ENCODE measurements at regions of chr2 and their contacts with region 1.

Region 1: GRCh38 chr2:85888684-85889626 is at the start of gene ST3GAL5:
- DNase-seq: peak; percentile 93
- ATAC-seq: peak; percentile 89
- H3K4me3 Mint-ChIP-seq: peak within 1 kb of the TSS; percentile 82
- H3K27ac Mint-ChIP-seq: peak within 1 kb of the TSS; percentile 86
- H3K4me1 Mint-ChIP-seq: peaks cover 72% of the 10 kb centered on the region
- H3K27me3 Mint-ChIP-seq: no peaks in the 10 kb centered on the region
- total RNA-seq, gene ST3GAL5: 73.9 to 74.0 TPM

Region 2: DNA sequence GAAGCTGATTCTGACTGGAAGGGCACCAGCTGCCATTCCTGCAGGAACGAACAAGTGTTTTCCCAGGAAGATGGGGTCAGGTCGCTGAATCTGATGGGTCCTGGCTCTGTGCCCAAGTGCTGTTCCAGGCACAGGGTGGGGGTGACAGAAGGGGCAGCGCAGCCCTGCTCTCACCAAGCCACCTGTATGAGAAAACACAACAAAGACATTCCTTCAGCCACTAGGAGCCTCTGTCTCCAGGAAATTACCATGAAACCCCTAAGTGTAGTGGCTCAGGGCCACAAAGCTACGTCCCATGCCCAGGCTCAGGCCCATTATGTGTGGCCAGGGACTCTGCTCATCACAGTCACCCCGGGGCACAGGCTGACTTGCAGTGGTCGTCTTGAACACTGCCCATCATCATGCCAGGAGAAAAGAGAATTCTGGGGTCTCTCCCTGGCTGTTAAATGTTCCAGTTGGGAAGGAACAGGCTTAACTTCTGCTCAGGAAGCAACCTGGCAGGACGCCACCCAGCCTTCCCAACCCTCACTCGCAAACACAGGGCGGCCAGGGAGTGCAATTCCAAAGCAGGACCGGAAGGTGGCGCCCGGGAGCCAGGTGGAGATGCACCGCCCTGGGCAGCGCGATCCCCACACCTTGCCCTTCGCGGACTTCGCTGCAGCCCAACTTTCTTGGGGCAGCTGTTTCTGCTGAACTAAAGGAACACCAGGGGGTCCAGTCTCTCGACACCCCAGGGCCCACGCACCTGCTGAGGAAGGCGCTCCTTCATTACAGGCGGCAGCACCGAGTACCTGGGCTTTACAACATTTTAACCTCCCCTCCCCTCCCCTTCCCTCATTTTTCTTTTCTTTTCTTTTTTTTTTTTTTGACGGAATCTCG is 209.9 kb before region 1 on chr2:
- CTCF ChIA-PET with region 1: no interaction called
- DNase-seq: peak; percentile 84
- ATAC-seq: peak; percentile 88
- H3K4me3 Mint-ChIP-seq: no peak overlapping the region
- H3K27ac Mint-ChIP-seq: peak overlapping the region; percentile 34
- H3K4me1 Mint-ChIP-seq: peaks cover 32% of the 10 kb centered on the region
- H3K27me3 Mint-ChIP-seq: peaks cover 12% of the 10 kb centered on the region

Region 3: GRCh38 chr2:85852937-85853498 is 35.9 kb before region 1 on chr2:
- CTCF ChIA-PET with region 1: interaction called, 78 read pairs
- DNase-seq: peak; percentile 89
- ATAC-seq: peak; percentile 85
- H3K4me3 Mint-ChIP-seq: peak overlapping the region; percentile 82
- H3K27ac Mint-ChIP-seq: peak overlapping the region; percentile 99
- H3K4me1 Mint-ChIP-seq: peaks cover 76% of the 10 kb centered on the region
- H3K27me3 Mint-ChIP-seq: no peaks in the 10 kb centered on the region

Region 4: DNA sequence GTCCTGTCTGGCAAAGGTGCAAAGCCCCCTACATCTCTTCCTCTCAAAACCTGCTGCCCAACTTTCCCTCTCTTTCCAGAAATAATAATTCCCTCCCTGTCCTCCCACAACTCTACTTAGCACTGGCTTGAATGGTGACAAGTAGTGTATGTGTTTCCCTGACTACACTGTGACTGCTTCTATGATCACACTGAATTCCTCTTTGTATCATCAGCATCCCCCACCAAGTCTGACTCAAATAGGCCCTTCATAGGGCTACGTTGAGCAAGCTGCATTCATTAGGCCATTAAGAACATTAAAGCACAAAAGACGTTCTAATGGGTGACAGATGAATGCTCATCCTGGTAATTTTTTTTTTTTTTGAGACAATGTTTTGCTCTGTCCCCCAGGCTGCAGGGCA is 13.5 kb after region 1 on chr2:
- CTCF ChIA-PET with region 1: interaction called, 23 read pairs
- DNase-seq: no peak
- ATAC-seq: no peak
- H3K4me3 Mint-ChIP-seq: no peak overlapping the region
- H3K27ac Mint-ChIP-seq: no peak overlapping the region
- H3K4me1 Mint-ChIP-seq: peaks cover 8% of the 10 kb centered on the region
- H3K27me3 Mint-ChIP-seq: peaks cover 5% of the 10 kb centered on the region

Region 5: GRCh38 chr2:86035883-86036668 is 147.1 kb after region 1 on chr2:
- CTCF ChIA-PET with region 1: interaction called, 121 read pairs
- DNase-seq: peak; percentile 89
- ATAC-seq: peak; percentile 48
- H3K4me3 Mint-ChIP-seq: peak overlapping the region; percentile 63
- H3K27ac Mint-ChIP-seq: peak overlapping the region; percentile 95
- H3K4me1 Mint-ChIP-seq: peaks cover 72% of the 10 kb centered on the region
- H3K27me3 Mint-ChIP-seq: no peaks in the 10 kb centered on the region

Region 6: GRCh38 chr2:86072271-86072858 is 183.4 kb after region 1 on chr2:
- CTCF ChIA-PET with region 1: interaction called, 126 read pairs
- DNase-seq: no peak
- ATAC-seq: no peak
- H3K4me3 Mint-ChIP-seq: no peak overlapping the region
- H3K27ac Mint-ChIP-seq: peak overlapping the region; percentile 58
- H3K4me1 Mint-ChIP-seq: peaks cover 33% of the 10 kb centered on the region
- H3K27me3 Mint-ChIP-seq: no peaks in the 10 kb centered on the region

Measured in activated CD8-positive, alpha-beta memory T cell treated with anti-CD3 and anti-CD28 coated beads, Interleukin-2, amount 10 ng/mL, durations not matched to agents 7 days and 5 days (primary cell).